ENCODE measurements at regions of chr11 and their contacts with region 1.

Region 1: DNA sequence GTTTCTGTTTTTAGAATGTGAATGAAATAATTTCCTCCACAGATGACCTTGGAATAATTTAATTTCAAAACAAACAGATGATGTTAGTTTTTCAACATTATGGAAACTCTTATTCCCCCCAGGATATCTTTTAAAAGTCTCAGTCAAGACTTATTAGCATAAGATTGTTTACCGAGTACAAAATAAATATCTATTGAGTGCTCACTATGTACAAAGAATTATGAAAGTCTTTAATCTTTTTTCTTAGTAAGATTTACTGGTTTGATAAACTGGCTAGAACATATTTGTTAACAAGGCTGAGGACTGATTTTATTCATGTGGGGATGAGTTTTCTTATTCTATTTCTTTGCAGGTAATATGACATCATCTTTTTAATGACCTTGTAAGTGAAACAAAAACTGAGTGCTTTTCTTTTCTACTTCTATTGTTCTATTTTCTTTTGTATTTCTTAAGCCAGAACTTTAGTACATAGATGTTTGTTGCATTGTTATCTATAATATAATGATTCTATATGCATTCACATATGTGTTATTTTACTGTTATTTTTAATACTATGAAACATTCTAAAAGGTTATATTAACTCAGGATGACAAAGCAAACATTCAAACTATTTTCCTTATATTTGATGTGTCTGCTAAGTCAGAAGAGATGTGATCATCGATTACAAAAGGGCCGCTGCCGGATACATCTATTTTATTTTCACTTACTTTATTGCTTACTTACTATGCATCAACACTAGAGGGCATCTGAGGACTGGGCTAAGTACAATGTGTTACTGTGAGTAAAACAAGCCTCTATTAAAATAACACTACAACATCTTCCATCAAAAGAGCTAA is 111.0 kb upstream of the ARHGAP42 start:
- DNase-seq: peak in 1 of 2 donors; percentile 22
- ATAC-seq: peak in 7 of 8 donors; percentile 47 to 91 (median 74)
- H3K4me3 ChIP-seq: peak overlapping the region in 1 of 10 donors; percentile 14
- H3K27ac ChIP-seq: no peak overlapping the region
- H3K4me1 ChIP-seq: peaks cover 0 to 11% (median 0%) of the 10 kb centered on the region in 9 donors
- H3K27me3 ChIP-seq: no peaks in the 10 kb centered on the region
- CTCF ChIP-seq: peak; percentile 59 to 91 (median 77)

Region 2: GRCh38 chr11:100557830-100558611 is 18.1 kb before region 1 on chr11:
- intact Hi-C with region 1: no loop called
- DNase-seq: no peak
- ATAC-seq: no peak
- H3K4me3 ChIP-seq: no peak overlapping the region
- H3K27ac ChIP-seq: no peak overlapping the region
- H3K4me1 ChIP-seq: peaks cover 0 to 44% (median 22%) of the 10 kb centered on the region in 9 donors
- H3K27me3 ChIP-seq: peaks cover 0 to under 1% (median 0%) of the 10 kb centered on the region in 7 donors
- CTCF ChIP-seq: no peak

Region 3: GRCh38 chr11:100639140-100639539 is 63.1 kb after region 1 on chr11:
- intact Hi-C with region 1: loop called in 2 of 10 experiments (anchors 5 kb)
- DNase-seq: no peak
- ATAC-seq: peak in 4 of 8 donors; percentile 29 to 64 (median 53)
- H3K4me3 ChIP-seq: no peak overlapping the region
- H3K27ac ChIP-seq: peak overlapping the region in 6 of 10 donors; percentile 6 to 38 (median 24)
- H3K4me1 ChIP-seq: peaks cover 0 to 10% (median 0%) of the 10 kb centered on the region in 9 donors
- H3K27me3 ChIP-seq: no peaks in the 10 kb centered on the region
- CTCF ChIP-seq: no peak

Region 4: GRCh38 chr11:100687630-100688395 is 111.7 kb after region 1 on chr11:
- intact Hi-C with region 1: loop called in 6 of 10 experiments (anchors 5 to 10 kb)
- DNase-seq: peak; percentile 29 to 66
- ATAC-seq: peak; percentile 48 to 77 (median 69)
- H3K4me3 ChIP-seq: peak overlapping the region; percentile 58 to 80 (median 73)
- H3K27ac ChIP-seq: peak overlapping the region; percentile 72 to 89 (median 85)
- H3K4me1 ChIP-seq: peaks cover 0 to 45% (median 15%) of the 10 kb centered on the region in 9 donors
- H3K27me3 ChIP-seq: peaks cover 0 to 12% (median 0%) of the 10 kb centered on the region in 7 donors
- CTCF ChIP-seq: peak; percentile 43 to 78 (median 63)

Region 5: GRCh38 chr11:100855466-100856067 is 279.5 kb after region 1 on chr11:
- intact Hi-C with region 1: loop called (anchors 1 to 5 kb)
- DNase-seq: no peak
- ATAC-seq: peak in 2 of 8 donors; percentile 50 to 54
- H3K4me3 ChIP-seq: no peak overlapping the region
- H3K27ac ChIP-seq: no peak overlapping the region
- H3K4me1 ChIP-seq: peaks cover 0 to 13% (median 0%) of the 10 kb centered on the region in 9 donors
- H3K27me3 ChIP-seq: no peaks in the 10 kb centered on the region
- CTCF ChIP-seq: peak; percentile 59 to 81 (median 71)

Measured in heart right ventricle (tissue), 16 donors.